HepG2 (cell line): ENCODE measurements at regions of chr4 and their contacts with region 1.

Region 1: DNA sequence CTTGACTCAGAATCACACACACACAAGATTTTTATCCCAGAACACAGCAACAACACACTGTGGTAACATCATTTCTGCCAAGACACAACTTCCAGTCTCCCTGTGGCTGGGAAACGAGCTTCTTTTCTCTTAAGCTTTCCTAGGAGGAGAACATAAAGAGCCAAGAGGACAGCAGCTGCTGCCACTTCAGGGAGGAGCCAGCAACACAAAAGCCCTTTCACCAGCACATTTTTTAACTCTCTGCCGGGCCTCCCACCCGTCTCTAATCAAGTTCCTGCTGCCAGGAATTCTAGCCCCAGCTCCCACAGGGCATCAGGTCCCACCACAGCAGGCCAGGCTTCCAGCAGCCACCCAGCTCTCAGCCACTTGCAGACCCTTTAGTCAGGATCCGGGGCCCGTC is 22.4 kb downstream of the FAT1 start:
- DNase-seq: peak; percentile 62
- ATAC-seq: peak; percentile 25
- H3K4me3 ChIP-seq: no peak overlapping the region
- H3K27ac ChIP-seq: peak overlapping the region; percentile 34
- H3K4me1 ChIP-seq: peaks cover 97% of the 10 kb centered on the region
- H3K27me3 ChIP-seq: no peaks in the 10 kb centered on the region
- CTCF ChIP-seq: no peak
- EP300 ChIP-seq: no peak
- POLR2A ChIP-seq: no peak
- RAD21 ChIP-seq: no peak

Region 2: DNA sequence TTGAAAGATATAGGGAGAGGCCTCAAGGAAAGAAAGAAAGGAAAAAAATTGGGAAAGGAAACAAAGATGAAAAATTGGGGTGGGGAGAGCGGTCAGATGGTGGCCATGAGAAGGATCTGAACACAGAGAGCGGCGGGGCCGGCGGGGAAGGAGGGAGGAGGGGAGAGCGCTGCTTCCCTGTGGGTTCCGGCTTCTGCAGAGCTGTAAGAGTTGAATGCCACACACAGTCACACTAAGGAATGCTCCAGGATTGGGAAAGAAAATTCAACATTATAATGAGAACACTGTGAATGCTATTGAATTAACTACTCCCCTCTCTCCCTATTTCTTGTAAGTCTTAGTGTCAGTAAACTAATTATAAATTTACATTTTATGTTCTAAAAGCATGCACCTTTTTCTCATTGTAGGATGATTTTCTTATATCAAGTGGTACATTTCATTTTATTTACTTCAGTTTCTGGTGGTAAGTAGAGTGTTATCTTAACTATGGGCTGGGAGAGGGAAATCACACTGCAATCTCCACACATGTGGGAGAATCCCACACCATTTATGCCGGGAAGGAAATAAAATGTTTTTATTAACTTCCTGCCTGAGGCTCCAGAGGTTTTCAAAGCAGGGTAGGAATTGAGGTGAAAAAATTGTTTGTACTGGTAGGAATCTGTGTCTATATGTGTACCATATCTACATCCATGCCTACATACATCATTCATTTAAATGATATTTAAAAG is 434.4 kb before region 1 on chr4:
- CTCF ChIA-PET with region 1: no interaction called
- POLR2A ChIA-PET with region 1: no interaction called
- in situ Hi-C with region 1: no loop called
- intact Hi-C with region 1: loop called (anchors 10 kb)
- DNase-seq: peak; percentile 58
- ATAC-seq: peak; percentile 97
- H3K4me3 ChIP-seq: peak overlapping the region; percentile 64 to 86 (median 69)
- H3K27ac ChIP-seq: peak overlapping the region; percentile 85
- H3K4me1 ChIP-seq: peaks cover 48% of the 10 kb centered on the region
- H3K27me3 ChIP-seq: no peaks in the 10 kb centered on the region
- CTCF ChIP-seq: peak; percentile 3; the same call in 1 of the 2 replicates
- EP300 ChIP-seq: no peak
- POLR2A ChIP-seq: peak; percentile 43 to 59; a peak in 2 of 4 replicates
- RAD21 ChIP-seq: no peak

Region 3: DNA sequence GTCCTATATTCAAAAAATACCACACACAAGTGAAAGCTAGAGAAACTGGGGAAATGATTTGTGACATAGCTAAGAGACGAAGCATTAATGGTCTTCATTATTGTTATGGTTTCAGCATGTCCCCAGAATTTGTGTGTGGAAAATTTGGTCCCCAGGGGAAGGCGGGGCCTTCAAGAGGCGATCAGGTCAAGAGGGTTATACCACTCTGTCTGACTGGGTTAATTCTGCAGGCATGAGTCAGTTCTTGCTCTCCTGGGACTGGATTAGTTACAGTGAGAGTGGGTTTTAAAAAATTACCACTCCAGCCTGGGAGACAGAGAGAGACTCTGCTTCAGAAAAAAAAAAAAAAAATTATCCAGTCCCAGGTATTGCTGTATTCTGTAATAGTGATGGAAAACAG is 143.8 kb before region 1 on chr4:
- CTCF ChIA-PET with region 1: no interaction called
- POLR2A ChIA-PET with region 1: no interaction called
- in situ Hi-C with region 1: no loop called
- intact Hi-C with region 1: no loop called
- DNase-seq: no peak
- ATAC-seq: no peak
- H3K4me3 ChIP-seq: no peak overlapping the region
- H3K27ac ChIP-seq: no peak overlapping the region
- H3K4me1 ChIP-seq: peaks cover 8% of the 10 kb centered on the region
- H3K27me3 ChIP-seq: peaks cover 1 to 29% of the 10 kb centered on the region in 2 experiments; a peak in 3 of 5 replicates
- CTCF ChIP-seq: no peak
- EP300 ChIP-seq: no peak
- POLR2A ChIP-seq: no peak
- RAD21 ChIP-seq: no peak

Region 4: GRCh38 chr4:186669159-186669731 is 32.0 kb before region 1 on chr4:
- CTCF ChIA-PET with region 1: no interaction called
- POLR2A ChIA-PET with region 1: no interaction called
- in situ Hi-C with region 1: no loop called
- intact Hi-C with region 1: no loop called
- DNase-seq: peak; percentile 50
- ATAC-seq: peak; percentile 63
- H3K4me3 ChIP-seq: no peak overlapping the region
- H3K27ac ChIP-seq: no peak overlapping the region
- H3K4me1 ChIP-seq: peaks cover 16% of the 10 kb centered on the region
- H3K27me3 ChIP-seq: no peaks in the 10 kb centered on the region
- CTCF ChIP-seq: peak; percentile 49
- EP300 ChIP-seq: no peak
- POLR2A ChIP-seq: no peak
- RAD21 ChIP-seq: no peak

Region 5: DNA sequence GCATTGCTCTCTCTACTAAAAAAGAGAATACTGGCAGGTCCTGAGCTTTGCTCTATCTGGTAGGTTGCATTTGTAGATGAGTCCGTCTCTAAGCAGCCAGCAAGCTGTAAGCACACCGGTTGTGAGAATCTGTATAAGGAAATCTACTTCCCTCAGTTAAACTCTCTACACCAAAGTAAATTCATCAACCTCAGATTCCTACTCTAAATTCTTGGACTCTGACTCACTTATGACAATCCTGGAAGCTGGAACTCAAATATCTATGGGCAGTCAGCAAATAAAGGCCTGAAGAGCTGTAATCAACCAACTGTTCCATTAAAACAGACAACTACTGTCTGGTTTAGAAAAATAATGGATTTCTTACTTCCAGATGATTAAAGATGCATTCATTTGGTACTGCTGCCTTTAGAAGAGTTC is 15.5 kb before region 1 on chr4:
- CTCF ChIA-PET with region 1: no interaction called
- POLR2A ChIA-PET with region 1: interaction called, 8 read pairs
- in situ Hi-C with region 1: no loop called
- intact Hi-C with region 1: loop called (anchors 2 kb)
- DNase-seq: peak; percentile 95
- ATAC-seq: peak; percentile 78
- H3K4me3 ChIP-seq: peak overlapping the region; percentile 4 to 64 (median 40); a peak in 4 of 6 replicates
- H3K27ac ChIP-seq: peak overlapping the region; percentile 89
- H3K4me1 ChIP-seq: peaks cover 93% of the 10 kb centered on the region
- H3K27me3 ChIP-seq: no peaks in the 10 kb centered on the region
- CTCF ChIP-seq: no peak
- EP300 ChIP-seq: peak in 1 of 2 experiments; percentile 86; a peak in 2 of 4 replicates
- POLR2A ChIP-seq: peak in 1 of 2 experiments; percentile 45; a peak in 1 of 4 replicates
- RAD21 ChIP-seq: no peak